Left cardiac atrium (tissue), 4 donors: ENCODE measurements at regions of chr22 and their contacts with region 1.

Region 1: GRCh38 chr22:46250035-46250782 is at the start of gene CDPF1:
- DNase-seq: peak; percentile 95
- ATAC-seq: peak; percentile 95 to 97
- total RNA-seq, gene CDPF1: 8.1 to 8.2 TPM

Region 2: DNA sequence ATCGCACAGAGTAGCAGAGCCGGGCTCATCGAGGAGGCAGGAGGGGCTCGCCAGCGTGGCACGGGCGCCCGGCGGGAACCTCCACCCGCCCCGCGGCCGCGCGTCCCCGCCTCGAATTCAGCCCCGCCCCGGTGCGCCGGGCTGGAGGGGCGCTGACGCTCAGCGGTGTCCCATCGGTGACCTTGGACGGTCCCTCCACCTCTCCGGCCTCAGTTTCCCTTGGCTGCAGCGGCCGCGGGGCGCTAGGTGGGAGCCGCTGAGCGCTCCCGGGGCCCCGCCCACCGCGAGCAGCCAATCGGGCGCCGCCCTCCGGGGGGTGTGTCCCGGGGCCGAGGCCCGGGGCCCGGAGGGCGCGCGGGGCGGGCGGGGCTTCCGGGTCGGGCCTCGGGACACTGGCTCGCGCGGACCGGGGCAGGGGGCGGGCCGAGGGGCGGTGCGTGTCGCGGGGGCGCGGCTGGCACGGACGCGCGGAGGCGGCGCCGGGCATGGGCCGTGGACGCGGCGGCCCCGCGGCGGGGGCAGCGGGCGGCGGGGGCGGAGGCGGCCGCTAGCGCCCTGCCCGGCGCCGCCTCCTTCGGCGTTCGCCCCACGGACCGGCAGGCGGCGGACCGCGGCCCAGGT is 100.1 kb before region 1 on chr22 and contains the start of gene PPARA:
- intact Hi-C with region 1: loop called in 1 of 2 experiments (anchors 10 kb)
- DNase-seq: peak; percentile 93
- ATAC-seq: peak; percentile 90 to 93
- total RNA-seq, gene PPARA: 49.6 to 66.2 TPM

Region 3: DNA sequence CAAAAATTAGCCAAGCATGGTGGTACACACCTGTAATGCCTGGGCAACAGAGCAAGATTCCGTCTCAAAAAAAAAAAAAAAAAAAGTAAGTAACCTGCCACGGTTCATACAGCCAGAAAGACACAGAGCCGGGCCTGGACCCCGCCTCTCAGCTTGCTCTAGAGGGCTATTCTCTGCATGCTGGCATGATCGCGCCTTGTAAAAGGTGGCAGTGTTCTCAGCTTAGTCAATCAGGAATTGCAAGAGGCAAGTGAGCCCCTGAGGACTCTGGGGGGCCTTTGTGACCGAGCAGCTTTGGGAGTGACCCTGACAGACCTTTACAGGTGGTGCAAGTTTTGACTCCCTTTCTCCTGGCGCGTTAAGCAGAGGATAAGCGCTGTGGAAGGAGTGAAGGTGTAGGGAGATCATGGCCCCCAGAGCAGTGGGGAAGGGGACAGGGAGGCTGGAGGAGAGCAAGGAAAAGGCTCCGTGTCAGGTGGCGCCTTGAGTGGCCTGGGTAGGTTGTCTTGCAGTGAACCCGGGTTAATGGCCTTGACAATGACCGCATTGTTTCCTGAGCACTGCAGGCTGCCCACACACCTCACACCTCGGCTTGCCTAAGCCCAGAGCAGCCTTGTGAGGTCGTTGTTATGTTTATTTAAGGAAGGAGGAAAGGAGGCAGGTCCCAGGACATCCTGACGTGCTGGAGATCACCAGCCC is 49.0 kb before region 1 on chr22:
- intact Hi-C with region 1: no loop called
- DNase-seq: no peak
- ATAC-seq: no peak

Region 4: GRCh38 chr22:46287873-46288751 is 37.9 kb after region 1 on chr22:
- intact Hi-C with region 1: loop called in 1 of 2 experiments (anchors 5 kb)
- DNase-seq: peak; percentile 46
- ATAC-seq: peak; percentile 22 to 31

Region 5: DNA sequence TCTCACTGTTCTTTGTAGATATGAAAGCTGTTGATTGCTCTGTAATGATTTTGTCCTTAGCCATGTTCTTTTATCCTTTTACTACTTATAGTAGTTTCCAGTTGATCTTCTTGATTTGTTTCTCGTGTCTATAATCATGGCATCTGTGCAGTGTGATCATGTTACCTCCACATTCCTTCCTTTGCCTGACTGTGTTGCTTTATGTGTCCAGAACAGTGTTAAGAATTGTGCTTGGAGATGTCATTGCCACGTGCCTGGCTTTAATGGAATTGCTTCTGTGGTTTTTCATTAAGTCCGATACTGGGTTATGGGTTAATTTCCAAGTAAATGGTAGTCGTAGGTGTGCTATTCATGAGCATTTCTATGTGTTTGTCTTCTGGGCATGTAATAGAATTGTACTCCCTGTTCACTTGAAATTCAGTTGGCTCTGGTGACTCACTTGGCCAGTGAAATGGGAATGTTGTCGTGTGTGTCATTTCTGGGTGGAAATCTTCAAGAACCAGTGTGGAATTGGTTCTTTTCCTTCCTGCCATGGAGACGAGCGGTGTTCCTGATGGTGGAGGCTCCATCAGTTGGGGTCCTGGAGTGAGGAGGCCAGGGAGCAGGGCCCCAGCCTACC is 53.2 kb after region 1 on chr22:
- intact Hi-C with region 1: no loop called
- DNase-seq: no peak
- ATAC-seq: no peak

Region 6: DNA sequence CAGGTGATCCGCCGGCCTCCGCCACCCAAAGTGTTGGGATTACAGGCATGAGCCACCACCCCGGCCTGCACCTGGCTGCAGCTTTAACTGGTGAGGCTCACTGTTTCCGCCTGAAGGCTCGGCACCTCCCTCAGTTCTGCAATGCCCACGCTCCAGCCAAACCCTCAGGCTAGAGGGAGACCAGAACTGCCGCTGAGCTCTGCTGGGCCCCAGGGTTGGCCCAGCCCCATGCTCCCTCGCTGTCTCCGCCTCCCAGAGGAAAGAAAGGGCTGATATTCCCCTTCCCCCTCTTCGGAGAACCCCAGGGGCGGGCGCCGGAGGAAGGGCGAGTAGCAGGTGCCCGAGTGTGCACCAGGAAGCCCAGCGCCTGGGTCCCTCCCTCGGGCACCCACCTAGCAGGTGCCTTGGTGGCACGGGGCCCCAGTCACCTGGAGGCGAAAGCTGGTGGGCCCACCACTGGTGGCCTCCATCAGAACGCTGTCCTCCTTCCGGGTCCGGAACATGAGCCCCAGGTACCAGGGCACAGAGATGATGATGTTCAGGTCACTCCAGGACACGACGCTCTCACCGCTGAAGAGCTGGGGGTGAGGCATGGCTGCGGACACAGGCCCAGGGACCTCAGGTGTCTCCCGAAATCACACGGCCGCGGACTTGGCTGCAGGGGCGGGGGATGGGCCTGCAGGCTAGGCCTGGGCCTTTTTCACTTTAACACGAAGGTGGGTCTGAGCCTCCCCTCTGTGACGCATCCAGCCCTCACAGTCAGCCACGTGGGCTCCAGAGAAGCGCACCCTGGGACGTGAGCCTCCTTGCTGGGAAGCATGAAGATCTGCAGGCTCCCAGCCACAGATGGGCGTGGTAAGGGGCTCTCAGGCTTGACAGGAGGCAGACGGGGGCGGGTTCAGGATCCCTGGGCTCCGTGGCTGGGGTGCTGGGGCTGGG is 158.6 kb after region 1 on chr22:
- intact Hi-C with region 1: no loop called
- DNase-seq: peak; percentile 20
- ATAC-seq: no peak

Region 7: GRCh38 chr22:46587492-46588278 is 337.5 kb after region 1 on chr22:
- intact Hi-C with region 1: no loop called
- DNase-seq: no peak
- ATAC-seq: peak in 1 of 2 donors; percentile 12